ENCODE measurements at regions of chr15 and their contacts with region 1.

Region 1: DNA sequence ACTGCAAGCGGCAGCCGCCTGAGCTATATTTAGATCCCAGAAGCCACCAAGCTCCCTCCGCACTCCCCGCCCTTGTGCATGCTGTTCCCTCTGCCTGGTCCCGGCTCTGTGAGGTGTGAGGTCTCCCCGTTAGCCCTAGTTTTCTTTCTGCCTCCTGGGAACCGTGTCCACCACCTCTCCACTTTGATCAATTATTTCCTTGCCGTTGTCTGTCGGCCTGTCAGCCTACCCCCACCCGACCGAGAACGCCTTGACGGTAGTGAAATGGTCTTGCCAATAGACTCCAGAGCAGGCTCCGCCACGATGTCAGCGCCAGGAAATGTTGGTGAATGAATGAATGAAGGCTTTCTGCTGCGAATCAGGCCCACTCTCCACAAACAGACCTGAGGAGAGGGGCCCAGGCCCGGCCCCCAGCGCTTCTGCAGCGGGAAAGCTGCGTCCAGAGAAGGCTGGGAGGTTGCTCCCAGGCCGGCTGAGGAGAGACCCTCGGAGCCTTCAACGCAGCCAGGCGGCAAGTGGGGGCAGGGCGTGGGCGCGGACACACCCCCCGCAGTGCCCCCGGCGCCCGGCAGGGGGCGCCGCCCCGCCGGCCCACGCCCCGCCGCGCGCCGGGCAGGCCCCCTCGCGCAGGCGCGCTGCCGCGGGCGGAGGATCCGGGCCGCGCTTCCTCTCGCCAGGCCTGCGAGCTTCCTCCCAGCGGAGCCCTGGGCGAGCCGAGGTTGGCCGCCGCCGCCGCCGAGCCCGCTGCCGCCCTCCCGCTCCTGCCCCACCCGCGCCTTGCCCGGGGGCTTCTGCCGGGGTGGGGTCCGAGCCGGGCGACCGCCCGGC is at the start of gene CSK:
- DNase-seq: peak; percentile 53
- H3K4me3 ChIP-seq: peak within 1 kb of the TSS; percentile 88 to 94 (median 90)
- H3K27ac ChIP-seq: peak within 1 kb of the TSS; percentile 62
- H3K4me1 ChIP-seq: peaks cover 37% of the 10 kb centered on the region
- H3K27me3 ChIP-seq: no peaks in the 10 kb centered on the region
- CTCF ChIP-seq: peak; percentile 52 to 65
- POLR2A ChIP-seq: peak; percentile 67
- total RNA-seq, gene CSK: 89.1 and 104 TPM in 2 replicates

Region 2: DNA sequence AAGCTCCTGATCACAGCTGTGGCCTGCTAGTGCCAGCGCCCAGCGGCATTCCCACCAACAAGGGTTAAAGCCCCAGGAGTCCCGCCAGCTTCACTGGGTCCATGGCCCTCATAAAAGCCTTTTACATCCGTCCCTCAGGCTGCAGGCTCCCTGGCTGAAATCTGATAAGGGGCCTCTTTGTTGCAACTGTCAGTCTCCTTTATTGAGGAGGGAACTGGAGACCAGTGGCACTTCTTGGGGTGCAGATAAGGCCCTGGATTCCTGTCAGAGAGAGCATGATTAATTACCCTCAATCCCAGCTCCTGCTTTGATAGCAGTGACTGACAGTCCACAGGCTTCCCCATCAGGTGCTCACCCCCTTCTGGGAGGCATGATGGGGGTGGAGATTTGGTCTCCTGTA is 196.9 kb before region 1 on chr15:
- CTCF ChIA-PET with region 1: no interaction called
- POLR2A ChIA-PET with region 1: no interaction called
- dilution Hi-C with region 1: no loop called
- intact Hi-C with region 1: no loop called
- DNase-seq: no peak
- H3K4me3 ChIP-seq: no peak overlapping the region
- H3K27ac ChIP-seq: no peak overlapping the region
- H3K4me1 ChIP-seq: peaks cover 19% of the 10 kb centered on the region
- H3K27me3 ChIP-seq: no peaks in the 10 kb centered on the region
- CTCF ChIP-seq: no peak
- POLR2A ChIP-seq: no peak

Region 3: GRCh38 chr15:74739905-74740304 is 41.7 kb before region 1 on chr15:
- CTCF ChIA-PET with region 1: no interaction called
- POLR2A ChIA-PET with region 1: no interaction called
- dilution Hi-C with region 1: no loop called
- intact Hi-C with region 1: no loop called
- DNase-seq: no peak
- H3K4me3 ChIP-seq: no peak overlapping the region
- H3K27ac ChIP-seq: no peak overlapping the region
- H3K4me1 ChIP-seq: no peaks in the 10 kb centered on the region
- H3K27me3 ChIP-seq: peaks cover 3 to 6% of the 10 kb centered on the region in 2 experiments
- CTCF ChIP-seq: no peak
- POLR2A ChIP-seq: no peak

Region 4: GRCh38 chr15:74793135-74794028 is 11.7 kb after region 1 on chr15:
- CTCF ChIA-PET with region 1: interaction called, 22 read pairs
- POLR2A ChIA-PET with region 1: no interaction called
- dilution Hi-C with region 1: no loop called
- intact Hi-C with region 1: loop called (anchors 1 kb)
- DNase-seq: no peak
- H3K4me3 ChIP-seq: no peak overlapping the region
- H3K27ac ChIP-seq: no peak overlapping the region
- H3K4me1 ChIP-seq: peaks cover 6% of the 10 kb centered on the region
- H3K27me3 ChIP-seq: no peaks in the 10 kb centered on the region
- CTCF ChIP-seq: peak in 1 of 2 donors; percentile 12
- POLR2A ChIP-seq: no peak